MCF 10A (cell line): ENCODE measurements at regions of chr5 and their contacts with region 1.

Region 1: DNA sequence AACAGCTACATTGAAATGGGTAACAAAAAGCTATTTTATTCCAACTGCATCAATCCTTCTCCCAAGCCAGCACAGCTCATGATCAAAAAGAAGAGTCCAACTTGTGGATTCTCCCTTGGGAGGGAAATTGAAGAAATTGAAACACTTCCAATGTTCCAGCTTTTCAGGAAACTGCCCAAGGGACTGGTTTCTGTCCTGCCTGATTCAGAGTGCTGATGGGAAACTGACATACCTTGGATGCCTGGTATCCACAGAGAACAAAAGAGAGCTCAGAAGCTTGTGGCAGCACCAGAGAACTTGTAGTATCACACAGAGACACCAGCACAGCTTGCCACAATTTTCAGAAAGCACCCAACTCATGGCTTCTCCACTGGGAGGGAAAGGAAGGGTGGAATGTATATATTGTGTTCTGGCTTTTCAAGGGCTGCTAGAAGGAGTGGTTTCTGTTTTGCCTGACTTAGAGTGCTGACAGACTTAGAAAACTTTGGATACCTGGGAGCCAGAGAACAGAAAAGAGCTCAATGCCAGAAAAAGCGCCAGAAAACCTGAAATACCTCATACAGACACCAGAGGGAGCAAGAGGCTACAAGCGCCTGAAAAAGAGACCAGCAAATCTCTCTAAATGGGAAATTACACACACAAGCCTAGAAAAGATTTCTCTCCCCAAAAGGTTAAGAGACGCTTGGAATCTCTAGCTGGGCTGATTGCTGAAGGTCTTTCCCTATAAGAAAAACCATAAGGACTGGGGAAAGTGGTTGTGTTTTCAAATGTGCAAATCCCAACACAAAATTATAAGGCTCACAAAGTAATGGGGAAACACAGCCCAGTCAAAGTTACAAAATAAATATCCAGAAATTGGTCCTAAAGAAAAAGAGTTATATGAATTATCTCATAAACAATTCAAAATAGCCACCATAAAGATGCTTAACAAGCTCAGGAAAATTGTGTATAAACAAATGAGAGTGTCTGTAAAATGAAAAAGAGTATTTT is 178.8 kb downstream of the SPOCK1 start:
- DNase-seq: peak; percentile 78
- H3K4me3 Mint-ChIP-seq: no peak overlapping the region
- H3K27ac Mint-ChIP-seq: peak overlapping the region; percentile 32
- H3K4me1 Mint-ChIP-seq: peaks cover 11% of the 10 kb centered on the region
- H3K27me3 Mint-ChIP-seq: no peaks in the 10 kb centered on the region
- CTCF ChIP-seq: peak; percentile 93

Region 2: DNA sequence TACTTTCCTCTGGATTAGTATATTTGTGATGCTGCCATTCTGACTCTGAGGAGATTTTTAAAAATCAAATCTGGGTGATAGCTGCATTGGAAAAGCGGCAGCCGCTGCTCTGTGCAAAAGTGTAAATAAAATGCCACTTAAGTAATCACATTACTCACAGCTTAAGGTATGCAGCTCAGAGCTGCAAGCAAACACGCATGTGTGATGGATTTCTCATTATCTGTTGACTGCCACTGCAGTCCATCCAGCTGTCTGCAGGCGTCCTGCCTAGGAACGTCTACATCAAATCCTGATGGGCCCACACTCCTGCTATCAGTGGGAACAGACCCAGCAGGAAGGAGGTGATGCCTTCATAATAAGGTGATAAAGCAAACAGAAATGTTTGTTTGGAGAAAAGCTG is 38.1 kb before region 1 on chr5:
- CTCF ChIA-PET with region 1: interaction called, 24 read pairs
- POLR2A ChIA-PET with region 1: interaction called, 3 read pairs
- intact Hi-C with region 1: no loop called
- DNase-seq: peak; percentile 34
- H3K4me3 Mint-ChIP-seq: no peak overlapping the region
- H3K27ac Mint-ChIP-seq: no peak overlapping the region
- H3K4me1 Mint-ChIP-seq: peaks cover 9% of the 10 kb centered on the region
- H3K27me3 Mint-ChIP-seq: no peaks in the 10 kb centered on the region
- CTCF ChIP-seq: no peak

Region 3: GRCh38 chr5:137344723-137345322 is 24.5 kb after region 1 on chr5:
- CTCF ChIA-PET with region 1: interaction called, 105 read pairs
- POLR2A ChIA-PET with region 1: no interaction called
- intact Hi-C with region 1: loop called (anchors 1 kb)
- DNase-seq: peak; percentile 78
- H3K4me3 Mint-ChIP-seq: no peak overlapping the region
- H3K27ac Mint-ChIP-seq: no peak overlapping the region
- H3K4me1 Mint-ChIP-seq: peaks cover 8% of the 10 kb centered on the region
- H3K27me3 Mint-ChIP-seq: no peaks in the 10 kb centered on the region
- CTCF ChIP-seq: peak; percentile 94

Region 4: DNA sequence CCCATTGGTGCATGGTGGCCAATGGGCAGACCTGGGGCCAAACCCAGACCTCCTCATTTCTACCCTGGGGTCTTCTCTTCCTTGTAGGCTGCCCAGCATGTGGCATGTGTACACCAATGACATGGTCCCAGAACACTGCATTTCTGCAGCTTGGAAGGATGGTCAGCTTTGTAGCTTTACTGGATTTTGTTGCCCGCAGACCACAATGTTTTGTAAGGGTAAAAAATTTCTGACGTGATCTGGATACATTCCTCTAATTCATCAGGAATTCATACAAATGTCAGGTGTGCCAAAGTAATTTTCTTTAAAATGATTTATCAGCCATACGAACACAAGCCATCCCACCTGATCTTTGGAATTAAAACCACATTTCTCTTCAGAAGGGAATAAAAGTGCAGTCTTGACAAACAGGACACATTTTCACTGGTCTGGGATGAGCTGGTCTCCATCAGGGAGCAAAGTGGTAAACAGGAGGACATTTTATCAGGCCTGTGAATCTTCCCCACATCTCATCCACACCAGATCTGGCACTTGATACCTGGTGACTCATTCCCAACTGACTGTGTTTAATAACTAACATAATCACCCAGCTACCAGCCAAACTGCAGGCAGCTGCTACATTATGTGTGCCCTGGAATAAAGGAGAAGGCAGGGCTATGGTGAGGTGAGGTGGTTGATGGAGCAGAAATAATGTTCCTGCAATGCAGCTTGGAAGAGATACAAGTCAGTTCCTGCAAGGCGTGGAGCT is 74.8 kb after region 1 on chr5:
- CTCF ChIA-PET with region 1: interaction called, 15 read pairs
- POLR2A ChIA-PET with region 1: no interaction called
- intact Hi-C with region 1: no loop called
- DNase-seq: peak; percentile 27
- H3K4me3 Mint-ChIP-seq: no peak overlapping the region
- H3K27ac Mint-ChIP-seq: peak overlapping the region; percentile 10
- H3K4me1 Mint-ChIP-seq: peaks cover 18% of the 10 kb centered on the region
- H3K27me3 Mint-ChIP-seq: no peaks in the 10 kb centered on the region
- CTCF ChIP-seq: no peak

Region 5: DNA sequence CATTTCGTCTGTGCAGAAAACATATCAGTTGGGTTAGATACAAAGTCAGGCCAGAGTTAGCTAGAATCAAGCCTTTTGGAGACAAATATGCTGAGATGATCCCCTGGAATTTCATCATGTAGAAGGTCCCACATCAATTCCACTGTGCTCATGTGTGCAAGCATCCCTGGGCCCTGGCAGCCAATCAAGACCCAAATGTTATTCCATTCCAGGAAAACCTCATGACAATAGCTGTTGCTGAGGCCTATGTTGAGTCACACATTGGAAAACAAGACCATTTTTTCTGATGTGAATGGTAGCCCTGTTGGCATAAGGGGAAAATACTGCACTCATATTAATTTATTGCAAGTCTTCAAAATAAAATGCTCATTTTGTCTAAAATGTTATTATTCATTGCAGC is 167.2 kb after region 1 on chr5:
- CTCF ChIA-PET with region 1: interaction called, 64 read pairs
- POLR2A ChIA-PET with region 1: no interaction called
- intact Hi-C with region 1: no loop called
- DNase-seq: peak; percentile 40
- H3K4me3 Mint-ChIP-seq: no peak overlapping the region
- H3K27ac Mint-ChIP-seq: no peak overlapping the region
- H3K4me1 Mint-ChIP-seq: peaks cover 14% of the 10 kb centered on the region
- H3K27me3 Mint-ChIP-seq: no peaks in the 10 kb centered on the region
- CTCF ChIP-seq: no peak

Region 6: DNA sequence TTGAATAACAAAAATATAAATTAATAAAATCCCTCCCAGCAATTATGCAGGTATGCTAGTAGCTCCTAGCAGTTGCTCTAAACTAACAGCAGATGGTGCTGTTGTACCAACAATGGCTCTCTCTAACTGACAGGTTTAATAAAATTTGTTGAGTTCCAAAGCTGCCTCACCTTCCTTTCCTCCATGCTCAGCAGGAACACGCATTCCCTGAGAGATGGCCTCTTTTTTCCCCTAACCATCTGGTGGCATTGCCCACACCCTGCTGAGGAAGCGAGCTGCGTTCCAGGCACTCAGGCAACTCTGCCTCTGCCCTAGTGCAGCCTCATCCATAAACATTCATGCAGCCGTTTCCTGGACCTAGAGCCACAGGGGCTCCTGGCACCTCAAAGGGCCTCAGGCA is 309.3 kb after region 1 on chr5:
- CTCF ChIA-PET with region 1: interaction called, 15 read pairs
- POLR2A ChIA-PET with region 1: no interaction called
- intact Hi-C with region 1: loop called (anchors 5 kb)
- DNase-seq: peak; percentile 87
- H3K4me3 Mint-ChIP-seq: no peak overlapping the region
- H3K27ac Mint-ChIP-seq: no peak overlapping the region
- H3K4me1 Mint-ChIP-seq: no peaks in the 10 kb centered on the region
- H3K27me3 Mint-ChIP-seq: no peaks in the 10 kb centered on the region
- CTCF ChIP-seq: peak; percentile 99